ENCODE measurements at regions of chr19 and their contacts with region 1.

Region 1: GRCh38 chr19:9474975-9475374 is 23.4 kb downstream of the ZNF560 start:
- DNase-seq: no peak
- ATAC-seq: no peak
- H3K4me3 ChIP-seq: no peak overlapping the region
- H3K4me3 Mint-ChIP-seq: no peak overlapping the region
- H3K27ac ChIP-seq: no peak overlapping the region
- H3K27ac Mint-ChIP-seq: no peak overlapping the region
- H3K4me1 ChIP-seq: no peaks in the 10 kb centered on the region
- H3K4me1 Mint-ChIP-seq: no peaks in the 10 kb centered on the region
- H3K27me3 ChIP-seq: peaks cover 0 to 3% of the 10 kb centered on the region in 2 experiments
- H3K27me3 Mint-ChIP-seq: no peaks in the 10 kb centered on the region
- CTCF ChIP-seq: no peak

Region 2: DNA sequence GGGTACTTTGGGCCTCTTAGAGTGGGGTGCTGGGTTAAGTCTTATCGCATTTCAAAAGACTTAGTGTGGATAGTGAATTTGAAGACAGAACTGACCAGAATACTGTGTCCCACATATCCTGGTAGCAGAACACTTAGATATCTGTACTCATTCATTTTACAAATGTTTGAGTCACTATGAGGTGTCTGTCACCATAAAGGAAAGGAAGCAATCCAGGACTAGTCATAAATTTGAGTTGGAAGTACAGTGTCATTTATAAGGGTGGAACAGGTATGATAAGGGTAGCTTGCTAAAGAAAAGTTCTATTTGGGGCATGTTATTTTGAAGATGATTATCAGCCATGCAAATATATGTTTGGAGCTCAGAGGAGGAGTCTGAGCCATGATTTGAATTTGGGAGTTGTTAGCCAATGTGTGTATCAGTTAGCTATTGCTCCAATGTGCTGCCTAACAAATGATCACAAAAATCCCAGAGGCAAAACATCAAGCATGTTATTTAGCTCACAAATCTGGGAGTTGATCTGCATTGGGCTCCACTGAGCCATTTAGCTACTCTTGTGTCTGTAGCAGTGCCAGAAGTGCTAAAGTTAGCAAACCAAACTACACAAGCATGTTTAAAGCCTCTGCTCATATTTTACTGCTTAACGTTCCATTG is 185.6 kb before region 1 on chr19:
- CTCF ChIA-PET with region 1: no interaction called
- POLR2A ChIA-PET with region 1: no interaction called
- intact Hi-C with region 1: no loop called
- DNase-seq: no peak
- ATAC-seq: no peak
- H3K4me3 ChIP-seq: no peak overlapping the region
- H3K4me3 Mint-ChIP-seq: no peak overlapping the region
- H3K27ac ChIP-seq: no peak overlapping the region
- H3K27ac Mint-ChIP-seq: no peak overlapping the region
- H3K4me1 ChIP-seq: no peaks in the 10 kb centered on the region
- H3K4me1 Mint-ChIP-seq: peaks cover 7% of the 10 kb centered on the region
- H3K27me3 ChIP-seq: no peaks in the 10 kb centered on the region
- H3K27me3 Mint-ChIP-seq: no peaks in the 10 kb centered on the region
- CTCF ChIP-seq: no peak

Region 3: GRCh38 chr19:9362905-9363304 is 112.1 kb before region 1 on chr19 and contains the start of gene ZNF177:
- CTCF ChIA-PET with region 1: no interaction called
- POLR2A ChIA-PET with region 1: no interaction called
- intact Hi-C with region 1: loop called in 1 of 2 experiments (anchors 10 kb)
- DNase-seq: no peak
- ATAC-seq: no peak
- H3K4me3 ChIP-seq: peak within 1 kb of the TSS in 1 of 2 experiments; percentile 18
- H3K4me3 Mint-ChIP-seq: peak within 1 kb of the TSS; percentile 53
- H3K27ac ChIP-seq: no peak within 1 kb of the TSS
- H3K27ac Mint-ChIP-seq: no peak within 1 kb of the TSS
- H3K4me1 ChIP-seq: no peaks in the 10 kb centered on the region
- H3K4me1 Mint-ChIP-seq: peaks cover 3% of the 10 kb centered on the region
- H3K27me3 ChIP-seq: no peaks in the 10 kb centered on the region
- H3K27me3 Mint-ChIP-seq: peaks cover 4% of the 10 kb centered on the region
- CTCF ChIP-seq: no peak
- total RNA-seq, gene ZNF177: 0.68 to 1.00 TPM

Region 4: GRCh38 chr19:9538183-9539058 is 63.4 kb after region 1 on chr19 and contains the start of gene ZNF426:
- CTCF ChIA-PET with region 1: no interaction called
- POLR2A ChIA-PET with region 1: no interaction called
- intact Hi-C with region 1: no loop called
- DNase-seq: peak; percentile 77 to 92 (median 86)
- ATAC-seq: peak; percentile 94
- H3K4me3 ChIP-seq: peak within 1 kb of the TSS; percentile 89 to 93
- H3K4me3 Mint-ChIP-seq: peak within 1 kb of the TSS; percentile 99
- H3K27ac ChIP-seq: peak within 1 kb of the TSS; percentile 91
- H3K27ac Mint-ChIP-seq: peak within 1 kb of the TSS; percentile 100
- H3K4me1 ChIP-seq: peaks cover 17% of the 10 kb centered on the region
- H3K4me1 Mint-ChIP-seq: peaks cover 35% of the 10 kb centered on the region
- H3K27me3 ChIP-seq: no peaks in the 10 kb centered on the region
- H3K27me3 Mint-ChIP-seq: no peaks in the 10 kb centered on the region
- CTCF ChIP-seq: no peak
- total RNA-seq, gene ZNF426: 16.6 to 17.9 TPM